GM13976 (cell line): ENCODE measurements at regions of chr1 and their contacts with region 1.

Region 1: DNA sequence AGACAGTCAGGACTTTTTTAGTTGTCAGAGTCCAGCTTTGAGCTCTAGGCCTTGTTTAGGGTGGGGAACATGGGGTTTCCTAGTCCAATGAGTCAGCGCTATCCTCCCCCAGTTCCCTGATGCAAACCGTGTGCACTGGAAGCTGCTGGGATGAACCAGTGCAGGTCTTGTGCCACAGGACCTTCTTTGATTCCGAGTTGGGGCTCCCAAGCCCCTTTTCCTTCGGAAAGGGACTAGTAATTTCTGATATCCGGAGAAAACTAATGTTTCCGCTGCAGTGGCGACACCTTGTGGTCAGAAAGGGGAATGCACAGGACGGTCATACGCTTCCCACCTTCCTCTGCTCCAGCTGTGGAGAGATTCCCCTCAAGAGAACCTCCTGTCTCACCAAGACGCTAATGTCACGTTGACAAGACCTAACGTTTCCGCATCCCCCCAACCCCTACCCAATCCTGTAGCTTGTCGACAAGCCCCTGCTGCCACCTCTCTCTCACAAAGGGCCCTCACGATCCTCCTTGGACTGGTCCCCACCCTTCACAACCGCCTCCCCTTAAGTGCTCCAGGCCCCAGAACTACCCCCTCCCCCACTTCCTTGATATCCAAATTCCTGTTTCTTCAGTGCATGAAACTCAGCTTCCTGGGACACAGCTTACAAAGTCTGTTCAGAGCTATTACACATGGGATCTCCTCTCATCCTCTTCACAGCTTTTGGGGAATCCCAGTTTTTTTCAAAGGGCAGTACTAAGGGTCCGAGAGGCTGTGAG is 30.9 kb downstream of the GPA33 start:
- DNase-seq: peak; percentile 70
- CTCF ChIP-seq: peak; percentile 82

Region 2: GRCh38 chr1:165580941-165581871 is 1478.0 kb before region 1 on chr1:
- in situ Hi-C with region 1: no loop called
- DNase-seq: no peak
- CTCF ChIP-seq: no peak

Region 3: GRCh38 chr1:166980818-166981217 is 78.4 kb before region 1 on chr1:
- in situ Hi-C with region 1: loop called (anchors 10 kb)
- DNase-seq: no peak
- CTCF ChIP-seq: no peak

Region 4: GRCh38 chr1:167221713-167222610 is 162.7 kb after region 1 on chr1:
- in situ Hi-C with region 1: no loop called
- DNase-seq: peak; percentile 63
- CTCF ChIP-seq: no peak